ENCODE measurements at regions of chr15 and their contacts with region 1.

Region 1: GRCh38 chr15:47473832-47474231 is 243.5 kb upstream of the SEMA6D start:
- DNase-seq: peak; percentile 76 to 82
- ATAC-seq: peak; percentile 93
- H3K4me3 ChIP-seq: no peak overlapping the region
- H3K27ac ChIP-seq: peak overlapping the region in 1 of 2 donors; percentile 76
- H3K4me1 ChIP-seq: peaks cover 0 to 19% of the 10 kb centered on the region in 2 donors
- H3K27me3 ChIP-seq: no peaks in the 10 kb centered on the region

Region 2: GRCh38 chr15:47374222-47374621 is 99.6 kb before region 1 on chr15:
- intact Hi-C with region 1: no loop called
- DNase-seq: no peak
- ATAC-seq: no peak
- H3K4me3 ChIP-seq: no peak overlapping the region
- H3K27ac ChIP-seq: no peak overlapping the region
- H3K4me1 ChIP-seq: no peaks in the 10 kb centered on the region
- H3K27me3 ChIP-seq: no peaks in the 10 kb centered on the region

Region 3: DNA sequence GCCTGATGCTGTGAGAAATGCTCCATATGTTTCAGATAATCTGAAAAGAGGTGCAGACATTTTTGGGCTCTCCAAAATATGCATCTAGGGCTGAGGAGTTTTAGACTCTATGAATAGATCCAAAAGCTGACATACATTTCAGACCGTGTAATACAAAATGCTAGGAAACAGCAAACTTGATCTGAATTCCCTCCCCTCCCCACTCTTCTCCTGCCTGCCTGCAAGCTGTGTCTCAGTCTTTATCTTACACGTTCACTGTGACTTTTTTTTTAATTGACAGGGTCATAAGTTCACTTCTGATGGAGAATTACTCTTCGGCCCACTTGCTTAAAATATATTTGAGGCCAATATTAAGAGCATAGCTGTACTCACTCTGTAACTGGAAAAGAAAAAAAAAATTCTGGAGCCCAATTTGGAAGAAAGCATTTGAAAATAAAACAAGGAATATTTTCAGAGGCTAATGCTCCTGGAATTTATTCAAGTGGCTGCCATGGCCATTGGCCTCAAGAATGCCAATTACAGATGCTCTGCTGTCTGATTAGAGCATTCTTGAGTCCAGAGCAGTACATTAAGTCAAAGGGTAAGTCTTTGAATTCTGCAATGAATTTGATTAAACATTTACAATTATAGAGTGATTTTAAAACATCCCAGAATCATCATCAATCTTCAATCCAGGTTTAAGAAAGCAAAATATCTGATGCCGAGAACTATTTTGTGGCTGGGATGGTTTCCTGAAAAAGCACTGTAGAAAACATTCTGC is 97.2 kb after region 1 on chr15:
- intact Hi-C with region 1: loop called in 1 of 2 experiments (anchors 5 kb)
- DNase-seq: no peak
- ATAC-seq: no peak
- H3K4me3 ChIP-seq: no peak overlapping the region
- H3K27ac ChIP-seq: peak overlapping the region; percentile 52 to 76
- H3K4me1 ChIP-seq: no peaks in the 10 kb centered on the region
- H3K27me3 ChIP-seq: no peaks in the 10 kb centered on the region

Region 4: DNA sequence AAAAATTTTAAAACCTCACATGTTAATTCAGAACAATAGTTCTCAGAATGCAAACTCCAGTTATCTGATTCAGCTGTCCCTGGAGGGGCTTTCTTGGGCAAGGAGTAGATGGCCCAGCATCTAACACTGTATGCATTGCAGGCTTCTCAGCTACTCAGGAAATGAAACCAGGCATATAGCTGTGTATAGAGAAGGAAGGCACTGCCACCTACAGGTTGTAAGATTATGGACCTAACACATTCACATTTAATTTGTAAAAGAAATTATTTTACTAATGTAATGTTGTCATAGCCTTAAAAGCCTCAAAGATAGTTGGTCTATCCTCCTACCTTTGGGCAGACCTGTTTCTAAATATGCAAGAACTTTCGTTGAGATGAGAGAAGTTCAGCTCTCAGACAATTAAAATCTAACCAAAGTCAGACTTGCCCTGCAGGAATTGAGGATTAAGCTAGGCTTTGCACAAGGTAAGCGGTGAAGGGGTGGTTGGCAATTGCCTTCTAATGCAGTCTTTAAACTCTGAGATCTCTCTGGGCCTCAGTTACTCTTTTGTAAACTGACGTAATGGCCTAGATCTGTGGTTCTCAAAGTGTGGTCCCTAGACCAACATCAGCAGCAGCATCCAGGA is 514.2 kb after region 1 on chr15:
- intact Hi-C with region 1: loop called (anchors 10 kb)
- DNase-seq: no peak
- ATAC-seq: peak; percentile 87
- H3K4me3 ChIP-seq: no peak overlapping the region
- H3K27ac ChIP-seq: no peak overlapping the region
- H3K4me1 ChIP-seq: no peaks in the 10 kb centered on the region
- H3K27me3 ChIP-seq: no peaks in the 10 kb centered on the region

Measured in aorta (tissue), 5 donors.